ENCODE measurements at regions of chr6 and their contacts with region 1.

Region 1: DNA sequence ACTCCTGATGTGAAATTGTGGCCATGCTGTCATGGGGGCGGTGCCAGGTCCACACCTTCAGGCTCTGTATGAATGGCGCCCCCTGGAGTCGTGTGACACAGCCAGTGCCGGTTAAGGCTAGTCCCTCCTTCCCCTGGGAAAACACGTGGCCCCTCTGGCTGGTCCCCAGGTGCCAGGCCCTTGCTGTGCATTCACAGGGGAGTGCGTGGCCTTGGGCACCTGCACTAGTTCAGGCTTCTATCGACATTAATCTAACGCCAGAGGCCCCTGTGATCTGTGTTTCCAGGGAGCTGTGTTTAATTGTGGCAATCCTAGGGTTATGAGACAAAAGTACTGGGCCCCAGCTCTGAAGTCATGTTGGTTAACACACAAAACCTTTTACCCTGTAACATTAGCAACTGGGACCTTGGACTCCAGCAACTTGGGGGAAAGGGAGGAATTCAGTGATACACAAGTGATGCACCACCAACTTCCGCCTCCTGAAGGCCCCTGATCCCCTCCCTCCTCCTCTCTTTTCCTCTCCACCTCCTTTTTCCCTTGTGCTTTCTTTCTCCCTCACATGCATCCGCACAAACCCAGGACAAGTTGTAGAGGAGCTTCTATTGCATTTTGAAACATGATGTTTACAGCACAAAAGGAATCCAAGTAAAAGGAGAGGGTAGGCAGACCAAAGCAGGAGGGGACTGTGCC is 74.0 kb downstream of the SSR1 start:
- DNase-seq: peak; percentile 66
- H3K4me3 ChIP-seq: no peak overlapping the region
- H3K27ac ChIP-seq: no peak overlapping the region
- H3K4me1 ChIP-seq: no peaks in the 10 kb centered on the region
- H3K27me3 ChIP-seq: no peaks in the 10 kb centered on the region
- CTCF ChIP-seq: peak; percentile 79 to 83
- POLR2A ChIP-seq: no peak

Region 2: DNA sequence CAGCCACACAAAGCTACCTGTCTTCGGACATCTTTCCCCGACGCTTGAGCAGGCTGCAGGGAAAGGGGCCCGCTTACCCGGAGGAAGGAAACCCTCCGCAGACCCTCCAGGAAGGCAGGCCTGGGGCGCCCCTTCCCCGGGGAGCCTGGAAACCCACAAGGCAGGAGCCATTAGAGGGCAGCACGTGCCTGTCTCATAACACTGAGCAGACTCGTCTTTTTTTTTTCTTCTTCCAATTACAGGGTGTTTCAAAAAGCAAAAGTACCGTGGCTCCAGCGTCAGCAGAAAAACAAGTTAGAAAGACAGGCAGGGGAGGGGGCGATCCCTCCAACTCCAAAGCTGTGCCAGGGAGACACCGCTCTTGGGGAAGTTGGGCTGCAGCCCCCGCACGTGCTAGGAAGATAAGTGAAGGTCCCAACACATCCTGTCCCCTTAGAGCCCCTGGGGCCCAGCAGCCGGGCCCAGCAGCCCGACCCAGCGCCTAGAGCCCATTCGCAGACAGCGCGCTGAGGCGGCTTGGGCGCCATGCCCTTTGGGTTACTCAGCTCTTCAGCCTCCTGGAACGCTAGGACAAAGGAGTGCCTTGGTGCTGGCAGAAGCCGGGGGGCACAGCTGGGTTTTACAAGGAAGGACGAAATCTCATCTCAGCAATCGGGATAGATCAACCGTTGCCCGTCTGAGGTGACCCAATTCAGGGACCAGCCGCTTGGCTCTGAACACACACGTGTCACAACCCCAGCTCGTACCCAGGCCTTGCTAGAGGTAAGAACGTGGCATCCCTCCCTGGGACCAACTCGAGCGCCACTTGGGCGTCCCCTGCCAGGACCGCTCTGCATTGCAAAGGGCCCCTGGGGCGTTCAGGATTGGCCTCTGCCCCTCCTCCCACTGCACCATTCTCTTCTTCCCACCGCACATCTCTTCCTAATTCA is 514.2 kb before region 1 on chr6:
- CTCF ChIA-PET with region 1: interaction called, 30 read pairs
- POLR2A ChIA-PET with region 1: no interaction called
- dilution Hi-C with region 1: no loop called
- intact Hi-C with region 1: loop called (anchors 1 kb)
- DNase-seq: peak; percentile 83
- H3K4me3 ChIP-seq: peak overlapping the region in 1 of 3 experiments; percentile 16
- H3K27ac ChIP-seq: peak overlapping the region; percentile 59
- H3K4me1 ChIP-seq: peaks cover 19% of the 10 kb centered on the region
- H3K27me3 ChIP-seq: peaks cover 0 to 2% of the 10 kb centered on the region in 2 experiments
- CTCF ChIP-seq: peak; percentile 57 to 60
- POLR2A ChIP-seq: no peak

Region 3: GRCh38 chr6:6788394-6789020 is 450.5 kb before region 1 on chr6:
- CTCF ChIA-PET with region 1: interaction called, 6 read pairs
- POLR2A ChIA-PET with region 1: no interaction called
- dilution Hi-C with region 1: no loop called
- intact Hi-C with region 1: loop called (anchors 1 kb)
- DNase-seq: peak; percentile 30
- H3K4me3 ChIP-seq: no peak overlapping the region
- H3K27ac ChIP-seq: no peak overlapping the region
- H3K4me1 ChIP-seq: no peaks in the 10 kb centered on the region
- H3K27me3 ChIP-seq: peaks cover 0 to 6% of the 10 kb centered on the region in 2 experiments
- CTCF ChIP-seq: peak; percentile 43 to 60
- POLR2A ChIP-seq: no peak

Region 4: DNA sequence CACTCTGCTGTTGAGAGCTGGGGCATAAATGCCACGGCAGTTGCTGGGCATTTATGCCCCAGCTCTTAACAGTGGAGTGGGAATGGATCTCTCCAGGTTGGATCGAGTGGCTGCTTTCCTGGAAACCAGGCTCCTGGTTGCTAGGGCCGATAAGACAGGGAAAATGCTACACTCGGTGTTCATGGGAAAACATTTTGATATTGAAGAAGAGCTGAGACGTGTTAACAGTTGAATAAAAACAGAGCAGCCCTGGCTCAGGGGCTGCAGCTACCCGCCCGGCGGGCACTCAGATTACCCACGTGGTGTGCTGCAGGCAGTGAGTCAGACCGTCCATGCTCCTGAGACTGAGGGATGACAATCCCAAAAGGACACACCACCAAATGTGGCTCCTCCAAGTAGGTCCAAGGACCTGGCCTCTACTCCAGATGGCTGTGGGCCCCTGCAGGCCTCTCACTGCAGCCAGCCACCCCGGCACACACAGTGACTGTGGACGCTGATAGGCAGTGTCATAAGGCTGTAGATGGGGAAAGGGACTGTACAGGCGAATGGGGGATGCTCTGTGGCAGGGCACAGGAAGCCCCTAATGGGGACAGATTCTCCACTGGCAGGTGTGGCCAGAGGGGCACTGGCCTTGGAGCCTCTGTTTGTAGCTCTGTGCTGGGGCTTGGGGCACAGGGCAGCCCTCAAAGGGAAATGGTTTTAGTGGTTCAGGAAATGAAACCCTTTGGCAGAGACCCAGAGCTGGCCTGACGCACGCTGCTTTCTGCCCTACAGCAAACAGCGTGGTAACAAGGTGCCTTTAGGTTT is 412.7 kb before region 1 on chr6:
- CTCF ChIA-PET with region 1: no interaction called
- POLR2A ChIA-PET with region 1: no interaction called
- dilution Hi-C with region 1: no loop called
- intact Hi-C with region 1: loop called (anchors 2 kb)
- DNase-seq: peak; percentile 91
- H3K4me3 ChIP-seq: no peak overlapping the region
- H3K27ac ChIP-seq: peak overlapping the region; percentile 48
- H3K4me1 ChIP-seq: peaks cover 16% of the 10 kb centered on the region
- H3K27me3 ChIP-seq: peaks cover 0 to 2% of the 10 kb centered on the region in 2 experiments
- CTCF ChIP-seq: no peak
- POLR2A ChIP-seq: no peak

Region 5: GRCh38 chr6:7107578-7108195 is 131.4 kb before region 1 on chr6 and contains the start of gene RREB1:
- CTCF ChIA-PET with region 1: interaction called, 4 read pairs
- POLR2A ChIA-PET with region 1: no interaction called
- dilution Hi-C with region 1: no loop called
- intact Hi-C with region 1: loop called (anchors 1 kb)
- DNase-seq: peak; percentile 68
- H3K4me3 ChIP-seq: peak within 1 kb of the TSS; percentile 87 to 99 (median 93)
- H3K27ac ChIP-seq: peak within 1 kb of the TSS; percentile 71
- H3K4me1 ChIP-seq: peaks cover 13% of the 10 kb centered on the region
- H3K27me3 ChIP-seq: no peaks in the 10 kb centered on the region
- CTCF ChIP-seq: no peak
- POLR2A ChIP-seq: no peak
- total RNA-seq, gene RREB1: 30.8 and 33.0 TPM in 2 replicates

Region 6: GRCh38 chr6:7207720-7208119 is 31.3 kb before region 1 on chr6:
- CTCF ChIA-PET with region 1: no interaction called
- POLR2A ChIA-PET with region 1: no interaction called
- dilution Hi-C with region 1: no loop called
- intact Hi-C with region 1: no loop called
- DNase-seq: no peak
- H3K4me3 ChIP-seq: no peak overlapping the region
- H3K27ac ChIP-seq: no peak overlapping the region
- H3K4me1 ChIP-seq: no peaks in the 10 kb centered on the region
- H3K27me3 ChIP-seq: no peaks in the 10 kb centered on the region
- CTCF ChIP-seq: no peak
- POLR2A ChIP-seq: no peak